ENCODE measurements at regions of chr1 and their contacts with region 1.

Region 1: GRCh38 chr1:205321164-205321958 is at the start of gene NUAK2:
- ATAC-seq: peak; percentile 85 to 96 (median 94)
- H3K4me3 ChIP-seq: peak within 1 kb of the TSS; percentile 67 to 89 (median 70)
- H3K27ac ChIP-seq: peak within 1 kb of the TSS; percentile 57 to 70
- H3K4me1 ChIP-seq: peaks cover 45% of the 10 kb centered on the region in 2 donors
- total RNA-seq, gene NUAK2: 0.09 to 17.9 (median 7.0) TPM

Region 2: GRCh38 chr1:205273551-205273982 is 47.8 kb before region 1 on chr1:
- in situ Hi-C with region 1: loop called in 3 of 9 experiments (anchors 10 kb)
- ATAC-seq: peak; percentile 62 to 96 (median 80)
- H3K4me3 ChIP-seq: no peak overlapping the region
- H3K27ac ChIP-seq: no peak overlapping the region
- H3K4me1 ChIP-seq: peaks cover 25 to 28% of the 10 kb centered on the region in 2 donors

Region 3: GRCh38 chr1:205284343-205285144 is 36.8 kb before region 1 on chr1:
- in situ Hi-C with region 1: loop called in 4 of 9 experiments (anchors 5 to 10 kb)
- ATAC-seq: peak; percentile 95 to 97 (median 96)
- H3K4me3 ChIP-seq: no peak overlapping the region
- H3K27ac ChIP-seq: peak overlapping the region; percentile 84 to 85
- H3K4me1 ChIP-seq: peaks cover 37 to 38% of the 10 kb centered on the region in 2 donors